Cardiac septum (tissue), 1 donor: ENCODE measurements at regions of chr19 and their contacts with region 1.

Region 1: DNA sequence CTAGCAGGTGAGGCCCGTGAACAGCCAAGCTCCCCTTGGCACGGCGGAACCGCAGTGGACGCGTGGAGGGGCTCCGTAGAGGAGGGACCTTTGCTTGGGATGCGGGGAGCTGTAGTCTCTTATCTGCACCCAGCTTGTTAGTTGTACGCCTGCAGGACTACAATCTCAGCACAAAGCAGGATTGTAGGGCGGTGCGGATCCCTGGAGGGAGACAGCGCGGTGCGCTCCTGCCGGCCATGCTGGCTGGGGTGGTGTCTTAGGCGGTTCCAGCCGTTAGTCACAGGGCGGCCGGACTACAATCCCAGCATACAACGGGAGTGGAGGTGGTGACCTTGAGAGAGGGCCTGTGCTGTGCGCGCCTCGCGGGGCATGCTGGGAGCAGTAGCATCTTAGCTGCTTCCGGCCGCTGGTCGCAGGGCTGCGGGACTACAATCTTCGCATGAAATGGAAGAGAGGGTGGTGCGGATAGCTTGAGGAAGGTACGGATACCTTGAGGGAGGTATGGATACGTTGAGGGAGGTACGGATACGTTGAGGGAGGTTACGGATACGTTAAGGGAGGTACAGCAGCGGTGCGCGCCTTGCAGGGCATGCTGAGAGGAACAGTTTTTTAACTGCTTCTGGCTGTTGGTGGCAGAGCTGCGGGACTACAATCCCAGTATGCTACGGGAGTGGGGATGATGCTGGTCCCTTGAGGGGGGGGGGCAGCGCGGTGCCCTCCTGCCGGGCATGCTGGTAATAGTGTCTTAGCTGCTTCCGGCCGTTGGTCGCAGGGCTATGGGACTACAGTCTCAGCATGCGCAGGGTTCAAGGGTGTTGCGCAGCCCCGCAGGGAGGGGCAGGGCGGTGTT is 1419.1 kb downstream of the UQCRFS1 start:
- DNase-seq: peak; percentile 98

Region 2: DNA sequence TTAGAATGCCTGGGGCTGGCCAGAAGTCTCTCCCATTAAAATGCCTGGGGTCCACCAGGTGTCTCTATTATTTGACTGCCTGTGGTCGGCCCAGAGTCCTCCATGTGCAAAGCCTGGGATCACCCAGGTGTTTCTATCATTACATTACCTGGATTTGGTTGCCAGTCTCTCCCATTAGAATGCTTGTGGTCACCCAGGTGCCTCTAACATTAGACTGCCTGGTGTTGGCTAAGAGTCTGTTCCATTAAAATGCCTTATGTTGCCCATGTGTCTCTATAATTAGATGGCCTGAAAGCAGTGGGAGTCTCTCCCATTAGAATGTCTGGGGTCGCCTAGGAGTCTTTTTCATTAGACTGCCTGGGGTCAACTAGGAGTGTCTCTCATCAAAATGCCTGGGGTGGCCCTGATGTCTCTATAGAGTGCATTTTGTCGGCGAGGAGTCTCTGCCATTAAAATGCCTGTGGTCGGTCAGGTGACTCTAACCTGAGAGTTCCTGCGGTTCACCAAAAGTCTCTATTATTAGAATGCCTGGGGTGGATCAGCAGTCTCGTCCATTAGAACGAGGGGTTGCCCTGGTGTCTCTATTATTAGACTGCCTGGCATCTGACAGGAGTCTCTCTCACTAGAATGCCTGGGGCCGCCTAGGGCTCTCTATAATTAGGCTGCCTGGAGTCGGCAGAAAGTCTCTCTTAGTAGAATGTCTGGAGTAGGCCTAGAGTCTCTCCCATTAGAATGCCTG is 121.4 kb before region 1 on chr19:
- intact Hi-C with region 1: loop called (anchors 5 kb)
- DNase-seq: no peak